ENCODE measurements at regions of chr6 and their contacts with region 1.

Region 1: DNA sequence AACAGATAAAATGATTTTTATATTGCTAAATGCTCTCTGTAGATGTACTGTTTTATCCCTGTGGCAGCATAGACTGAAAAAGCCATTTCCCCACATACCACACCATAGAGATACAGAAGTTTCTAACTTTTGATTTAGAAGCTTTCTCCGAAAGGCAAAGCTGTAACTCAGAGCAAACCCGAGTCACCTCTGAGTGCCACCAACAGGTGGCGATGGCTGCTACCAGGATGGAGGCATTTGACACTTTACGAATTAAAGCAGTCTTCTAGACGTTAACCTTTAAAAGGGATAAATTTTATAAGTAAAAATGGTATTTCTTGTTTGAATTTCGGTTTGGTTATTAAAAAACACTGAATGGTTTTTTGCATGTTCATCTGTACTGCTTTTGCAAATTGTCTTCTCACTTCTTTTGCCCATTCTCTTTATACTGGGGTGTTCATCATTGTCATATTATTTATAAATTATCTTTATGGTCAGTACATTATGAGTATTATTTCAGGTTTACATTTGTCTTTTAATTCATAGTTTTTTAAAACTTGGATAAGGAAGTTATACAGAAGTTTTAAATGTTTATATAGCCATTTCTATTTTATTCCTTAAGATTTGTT is 201.0 kb upstream of the CEP162 start:
- DNase-seq: peak; percentile 10 to 88
- H3K4me3 ChIP-seq: no peak overlapping the region
- H3K27ac ChIP-seq: no peak overlapping the region
- H3K4me1 ChIP-seq: peaks cover 0 to 11% of the 10 kb centered on the region in 2 donors
- H3K27me3 ChIP-seq: no peaks in the 10 kb centered on the region
- CTCF ChIP-seq: peak; percentile 59 to 84 (median 82)

Region 2: GRCh38 chr6:83985308-83985713 is 443.1 kb before region 1 on chr6:
- intact Hi-C with region 1: loop called (anchors 10 kb)
- DNase-seq: no peak
- H3K4me3 ChIP-seq: no peak overlapping the region
- H3K27ac ChIP-seq: peak overlapping the region; percentile 84 to 85
- H3K4me1 ChIP-seq: peaks cover 4 to 29% of the 10 kb centered on the region in 2 donors
- H3K27me3 ChIP-seq: no peaks in the 10 kb centered on the region
- CTCF ChIP-seq: peak in 1 of 3 experiments; percentile 30

Region 3: GRCh38 chr6:84515067-84515466 is 86.7 kb after region 1 on chr6:
- intact Hi-C with region 1: loop called (anchors 5 kb)
- DNase-seq: no peak
- H3K4me3 ChIP-seq: peak overlapping the region in 1 of 2 donors; percentile 28
- H3K27ac ChIP-seq: peak overlapping the region; percentile 68 to 73
- H3K4me1 ChIP-seq: peaks cover 0 to 29% of the 10 kb centered on the region in 2 donors
- H3K27me3 ChIP-seq: no peaks in the 10 kb centered on the region
- CTCF ChIP-seq: no peak

Region 4: DNA sequence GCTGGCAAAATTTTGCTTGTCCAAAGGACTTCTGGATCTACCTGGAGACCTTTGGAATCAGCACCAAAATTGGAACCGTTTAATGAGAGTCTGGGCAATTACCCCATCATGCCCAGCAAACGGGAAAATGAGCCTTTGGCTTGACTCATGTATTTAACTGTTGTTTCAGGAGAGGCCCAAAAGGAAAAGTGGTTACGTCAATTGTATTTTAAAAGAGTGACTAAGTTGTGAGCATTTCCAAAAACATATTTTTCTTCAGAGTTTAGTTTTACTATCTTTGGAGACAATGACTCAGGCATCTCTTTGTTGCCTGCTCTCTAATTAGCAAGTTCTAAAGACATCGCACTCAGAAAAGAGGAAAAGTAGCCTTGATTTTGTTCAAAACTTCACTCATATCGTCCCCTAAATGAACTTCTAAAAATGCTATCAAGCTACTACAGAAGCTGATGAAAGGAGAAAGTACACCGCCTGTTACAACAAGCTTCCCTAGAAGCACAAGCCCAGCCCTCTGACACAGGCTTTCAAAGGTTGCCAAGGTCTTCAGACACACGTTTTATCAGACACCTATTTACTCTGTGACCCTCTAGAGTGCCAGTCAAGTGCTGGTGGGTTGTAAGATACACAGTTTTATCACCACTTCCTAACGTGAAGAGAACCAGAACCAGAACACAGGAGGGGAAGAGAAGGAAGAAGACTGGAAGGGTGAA is 189.8 kb after region 1 on chr6:
- intact Hi-C with region 1: loop called (anchors 5 kb)
- DNase-seq: peak in 1 of 2 donors; percentile 77
- H3K4me3 ChIP-seq: peak overlapping the region; percentile 28 to 29
- H3K27ac ChIP-seq: peak overlapping the region; percentile 90 to 92
- H3K4me1 ChIP-seq: peaks cover 0 to 12% of the 10 kb centered on the region in 2 donors
- H3K27me3 ChIP-seq: no peaks in the 10 kb centered on the region
- CTCF ChIP-seq: no peak

Region 5: GRCh38 chr6:85460921-85461797 is 1032.8 kb after region 1 on chr6:
- intact Hi-C with region 1: loop called (anchors 10 kb)
- DNase-seq: no peak
- H3K4me3 ChIP-seq: no peak overlapping the region
- H3K27ac ChIP-seq: peak overlapping the region; percentile 90 to 93
- H3K4me1 ChIP-seq: peaks cover 19 to 82% of the 10 kb centered on the region in 2 donors
- H3K27me3 ChIP-seq: no peaks in the 10 kb centered on the region
- CTCF ChIP-seq: no peak